GM12878 (cell line): ENCODE measurements at regions of chrX and their contacts with region 1.

Region 1: GRCh38 chrX:110156167-110156754 is 153.3 kb downstream of the TMEM164 start:
- DNase-seq: no peak
- ATAC-seq: no peak
- H3K4me3 ChIP-seq: no peak overlapping the region
- H3K27ac ChIP-seq: no peak overlapping the region
- H3K4me1 ChIP-seq: peaks cover 11% of the 10 kb centered on the region
- H3K27me3 ChIP-seq: no peaks in the 10 kb centered on the region
- CTCF ChIP-seq: peak; percentile 13 to 44 (median 39); a peak in 3 of 6 replicates
- EP300 ChIP-seq: no peak
- POLR2A ChIP-seq: no peak
- RAD21 ChIP-seq: peak; percentile 31; the same call in 1 of the 2 replicates

Region 2: GRCh38 chrX:110167952-110168451 is 11.7 kb after region 1 on chrX:
- CTCF ChIA-PET with region 1: interaction called, 51 read pairs
- POLR2A ChIA-PET with region 1: no interaction called
- RAD21 ChIA-PET with region 1: interaction called, 4 read pairs
- SMC1A ChIA-PET with region 1: interaction called, 28 read pairs
- in situ Hi-C with region 1: no loop called
- intact Hi-C with region 1: no loop called
- DNase-seq: no peak
- ATAC-seq: peak; percentile 73
- H3K4me3 ChIP-seq: no peak overlapping the region
- H3K27ac ChIP-seq: no peak overlapping the region
- H3K4me1 ChIP-seq: peaks cover 10% of the 10 kb centered on the region
- H3K27me3 ChIP-seq: no peaks in the 10 kb centered on the region
- CTCF ChIP-seq: peak; percentile 52 to 75 (median 67)
- EP300 ChIP-seq: no peak
- POLR2A ChIP-seq: no peak
- RAD21 ChIP-seq: peak; percentile 52

Region 3: DNA sequence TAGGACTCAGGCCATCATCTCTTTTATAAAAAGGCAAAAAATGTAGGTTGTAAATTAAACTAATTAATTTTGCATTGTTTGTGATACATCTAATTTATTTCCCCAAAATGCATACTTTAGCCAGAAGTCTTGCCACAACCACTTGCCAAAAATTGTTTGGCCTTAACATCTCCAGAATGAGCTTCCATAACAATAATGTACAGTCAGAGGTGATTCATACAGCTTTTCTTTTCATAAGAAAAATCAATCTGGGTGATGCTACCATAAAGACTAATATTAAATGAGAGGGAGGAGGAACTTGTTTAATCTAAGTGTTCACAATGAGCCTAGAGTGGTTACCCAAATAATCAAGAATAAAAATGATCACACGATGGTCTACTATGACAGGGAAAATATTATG is 102.3 kb after region 1 on chrX:
- CTCF ChIA-PET with region 1: no interaction called
- POLR2A ChIA-PET with region 1: no interaction called
- RAD21 ChIA-PET with region 1: no interaction called
- SMC1A ChIA-PET with region 1: no interaction called
- in situ Hi-C with region 1: no loop called
- intact Hi-C with region 1: no loop called
- DNase-seq: no peak
- ATAC-seq: no peak
- H3K4me3 ChIP-seq: no peak overlapping the region
- H3K27ac ChIP-seq: no peak overlapping the region
- H3K4me1 ChIP-seq: no peaks in the 10 kb centered on the region
- H3K27me3 ChIP-seq: no peaks in the 10 kb centered on the region
- CTCF ChIP-seq: no peak
- EP300 ChIP-seq: no peak
- POLR2A ChIP-seq: no peak
- RAD21 ChIP-seq: no peak

Region 4: DNA sequence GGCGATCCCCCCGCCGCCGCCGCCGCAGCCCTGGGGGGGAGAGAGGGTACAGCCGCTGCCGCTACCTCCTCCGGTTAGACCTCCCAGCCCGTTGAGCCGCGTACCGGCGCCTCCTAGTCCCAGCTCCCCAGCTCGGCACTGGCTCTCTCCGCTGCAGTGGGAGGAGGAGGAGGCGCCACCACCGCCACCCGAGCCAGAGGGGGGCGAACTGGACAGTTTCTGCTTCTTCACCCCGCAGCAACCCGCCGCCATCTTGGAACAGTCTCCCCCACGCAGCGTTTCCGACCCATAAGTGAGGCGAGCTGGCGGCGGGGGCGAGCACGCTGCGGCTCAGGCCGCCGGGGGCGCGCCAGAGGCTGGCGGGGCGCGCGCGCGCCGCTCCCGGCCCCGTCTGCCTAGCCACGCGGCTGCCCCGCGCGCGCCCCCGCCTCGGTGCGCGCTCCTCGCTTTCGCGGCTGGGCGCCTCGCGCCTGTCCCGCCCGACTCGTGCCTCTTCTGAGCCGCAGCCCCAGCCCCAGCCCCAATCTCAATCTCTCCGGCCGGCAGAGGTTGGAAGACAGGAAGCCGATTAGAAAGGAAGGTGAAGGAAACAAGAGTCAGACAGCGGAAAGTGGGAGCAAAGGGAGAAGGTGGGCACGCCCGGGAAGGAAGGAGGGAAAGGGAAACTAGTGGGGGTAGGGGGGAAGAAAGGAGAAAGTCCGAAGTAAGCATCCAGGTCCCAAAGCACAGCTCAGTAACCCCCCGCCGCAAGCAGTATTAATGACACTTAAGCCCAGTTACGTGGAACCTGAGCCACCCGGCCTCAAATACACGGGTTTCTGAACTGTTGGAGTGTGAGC is 161.8 kb after region 1 on chrX and contains the start of gene AMMECR1:
- CTCF ChIA-PET with region 1: interaction called, 13 read pairs
- POLR2A ChIA-PET with region 1: no interaction called
- RAD21 ChIA-PET with region 1: interaction called, 7 read pairs
- SMC1A ChIA-PET with region 1: interaction called, 11 read pairs
- in situ Hi-C with region 1: no loop called
- intact Hi-C with region 1: no loop called
- DNase-seq: no peak
- ATAC-seq: peak; percentile 73
- H3K4me3 ChIP-seq: peak within 1 kb of the TSS; percentile 79
- H3K27ac ChIP-seq: peak within 1 kb of the TSS; percentile 75
- H3K4me1 ChIP-seq: no peaks in the 10 kb centered on the region; the same call in 1 of the 2 replicates
- H3K27me3 ChIP-seq: no peaks in the 10 kb centered on the region
- CTCF ChIP-seq: no peak
- EP300 ChIP-seq: no peak
- POLR2A ChIP-seq: peak; percentile 91
- RAD21 ChIP-seq: no peak
- polyA plus RNA-seq, gene AMMECR1: 4.9 to 6.4 TPM

Region 5: DNA sequence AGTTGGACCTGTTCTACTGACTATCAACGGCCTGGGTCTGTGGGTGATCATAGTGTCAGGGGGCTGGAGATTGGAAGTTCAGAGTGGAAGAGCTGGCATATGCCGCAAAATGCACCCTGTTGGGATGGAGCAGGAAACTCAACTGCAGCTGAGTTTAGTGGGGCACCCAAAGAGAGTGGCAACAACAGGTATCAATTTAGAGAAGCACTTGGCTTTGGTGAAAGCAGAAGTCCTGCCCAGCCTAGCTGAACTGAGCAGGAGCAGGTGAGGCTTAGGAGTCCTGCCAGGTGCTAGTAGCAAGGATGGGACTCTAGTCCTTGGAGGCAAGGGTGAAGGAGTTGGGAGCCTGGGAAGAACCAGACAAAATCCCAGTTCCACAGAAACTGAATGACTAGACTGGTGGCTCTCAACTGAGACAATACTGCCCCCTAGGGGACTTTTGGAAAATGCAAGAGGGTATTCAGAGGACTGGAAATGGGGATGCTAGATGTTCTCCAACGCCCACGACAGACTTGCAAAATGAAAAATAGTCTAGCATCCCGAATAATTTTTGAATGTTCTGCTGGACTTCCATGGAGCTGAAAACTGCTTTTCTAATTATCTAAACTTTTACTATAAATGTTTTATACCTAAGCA is 251.8 kb after region 1 on chrX:
- CTCF ChIA-PET with region 1: interaction called, 792 read pairs
- POLR2A ChIA-PET with region 1: interaction called, 3 read pairs
- RAD21 ChIA-PET with region 1: interaction called, 130 read pairs
- SMC1A ChIA-PET with region 1: interaction called, 289 read pairs
- in situ Hi-C with region 1: loop called (anchors 5 kb)
- intact Hi-C with region 1: loop called (anchors 1 kb)
- DNase-seq: no peak
- ATAC-seq: peak; percentile 82
- H3K4me3 ChIP-seq: no peak overlapping the region
- H3K27ac ChIP-seq: no peak overlapping the region
- H3K4me1 ChIP-seq: no peaks in the 10 kb centered on the region
- H3K27me3 ChIP-seq: no peaks in the 10 kb centered on the region
- CTCF ChIP-seq: peak; percentile 60 to 73 (median 68); a peak in 5 of 6 replicates
- EP300 ChIP-seq: no peak
- POLR2A ChIP-seq: no peak
- RAD21 ChIP-seq: peak; percentile 90

Region 6: GRCh38 chrX:110665223-110666002 is 509.2 kb after region 1 on chrX:
- CTCF ChIA-PET with region 1: no interaction called
- POLR2A ChIA-PET with region 1: no interaction called
- RAD21 ChIA-PET with region 1: no interaction called
- SMC1A ChIA-PET with region 1: no interaction called
- in situ Hi-C with region 1: no loop called
- intact Hi-C with region 1: no loop called
- DNase-seq: no peak
- ATAC-seq: peak; percentile 97
- H3K4me3 ChIP-seq: no peak overlapping the region
- H3K27ac ChIP-seq: no peak overlapping the region
- H3K4me1 ChIP-seq: no peaks in the 10 kb centered on the region
- H3K27me3 ChIP-seq: no peaks in the 10 kb centered on the region; a peak in 1 of 4 replicates
- CTCF ChIP-seq: peak; percentile 42 to 69 (median 68)
- EP300 ChIP-seq: no peak
- POLR2A ChIP-seq: no peak
- RAD21 ChIP-seq: peak; percentile 42

Region 7: DNA sequence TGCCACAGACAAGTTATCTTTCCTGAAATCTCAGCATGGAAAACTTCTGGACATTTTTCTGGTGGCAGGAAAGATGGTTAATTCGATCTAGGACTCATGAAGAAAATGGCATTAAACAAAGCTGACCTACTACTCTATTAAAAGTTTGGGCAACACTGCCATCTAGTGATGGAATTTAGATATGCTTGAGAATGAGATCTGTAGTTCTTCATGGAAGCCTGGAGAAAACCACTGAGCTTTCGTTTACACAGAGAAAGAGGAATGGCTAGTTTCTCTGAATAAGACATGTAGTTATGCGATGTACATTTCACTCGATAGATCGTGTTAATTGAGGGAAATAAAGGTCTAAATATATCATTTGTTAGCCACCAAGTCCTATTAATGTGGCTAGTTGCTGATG is 691.1 kb after region 1 on chrX:
- CTCF ChIA-PET with region 1: interaction called, 6 read pairs
- POLR2A ChIA-PET with region 1: no interaction called
- RAD21 ChIA-PET with region 1: no interaction called
- SMC1A ChIA-PET with region 1: interaction called, 6 read pairs
- in situ Hi-C with region 1: loop called (anchors 5 kb)
- intact Hi-C with region 1: loop called (anchors 5 kb)
- DNase-seq: peak; percentile 23
- ATAC-seq: peak; percentile 89
- H3K4me3 ChIP-seq: no peak overlapping the region
- H3K27ac ChIP-seq: no peak overlapping the region
- H3K4me1 ChIP-seq: no peaks in the 10 kb centered on the region
- H3K27me3 ChIP-seq: no peaks in the 10 kb centered on the region
- CTCF ChIP-seq: peak; percentile 46 to 66 (median 55); a peak in 5 of 6 replicates
- EP300 ChIP-seq: no peak
- POLR2A ChIP-seq: no peak
- RAD21 ChIP-seq: peak; percentile 71